Left ventricle myocardium inferior (tissue), 1 donor: ENCODE measurements at regions of chr18 and their contacts with region 1.

Region 1: DNA sequence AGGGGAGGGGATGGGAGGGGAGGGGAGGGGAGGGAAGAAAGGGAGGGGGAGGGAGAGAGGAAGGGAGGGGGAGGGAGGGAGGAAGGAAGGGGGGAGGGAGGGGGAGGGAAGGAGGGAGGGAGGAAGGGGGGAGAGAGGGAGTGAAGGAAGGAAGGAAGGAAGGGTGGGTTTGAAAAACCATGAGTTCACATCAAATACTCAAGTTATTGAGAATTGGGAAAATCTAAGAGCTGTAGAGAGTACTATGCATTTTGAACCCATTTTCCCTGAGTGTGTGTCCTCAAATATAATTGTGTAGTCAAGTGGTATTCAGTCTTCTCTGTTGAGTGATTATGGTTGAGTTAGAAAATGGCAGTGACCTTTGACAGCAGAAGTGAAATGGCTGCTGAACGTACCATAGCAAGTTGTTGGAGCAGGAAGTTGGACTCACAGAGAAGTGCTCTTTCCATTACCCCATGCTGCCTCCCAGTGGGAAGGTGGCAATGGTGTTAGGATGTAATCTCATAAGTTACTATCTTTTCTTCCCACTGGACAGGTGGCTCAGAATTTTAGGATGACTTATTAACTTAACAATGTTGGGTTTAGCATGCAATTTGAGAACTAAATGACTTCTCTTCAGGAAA is 214.6 kb downstream of the SETBP1 start:
- DNase-seq: peak; percentile 28
- H3K4me3 ChIP-seq: no peak overlapping the region
- H3K27ac ChIP-seq: no peak overlapping the region
- H3K4me1 ChIP-seq: peaks cover 23% of the 10 kb centered on the region
- H3K27me3 ChIP-seq: peaks cover 43% of the 10 kb centered on the region
- CTCF ChIP-seq: peak; percentile 69

Region 2: DNA sequence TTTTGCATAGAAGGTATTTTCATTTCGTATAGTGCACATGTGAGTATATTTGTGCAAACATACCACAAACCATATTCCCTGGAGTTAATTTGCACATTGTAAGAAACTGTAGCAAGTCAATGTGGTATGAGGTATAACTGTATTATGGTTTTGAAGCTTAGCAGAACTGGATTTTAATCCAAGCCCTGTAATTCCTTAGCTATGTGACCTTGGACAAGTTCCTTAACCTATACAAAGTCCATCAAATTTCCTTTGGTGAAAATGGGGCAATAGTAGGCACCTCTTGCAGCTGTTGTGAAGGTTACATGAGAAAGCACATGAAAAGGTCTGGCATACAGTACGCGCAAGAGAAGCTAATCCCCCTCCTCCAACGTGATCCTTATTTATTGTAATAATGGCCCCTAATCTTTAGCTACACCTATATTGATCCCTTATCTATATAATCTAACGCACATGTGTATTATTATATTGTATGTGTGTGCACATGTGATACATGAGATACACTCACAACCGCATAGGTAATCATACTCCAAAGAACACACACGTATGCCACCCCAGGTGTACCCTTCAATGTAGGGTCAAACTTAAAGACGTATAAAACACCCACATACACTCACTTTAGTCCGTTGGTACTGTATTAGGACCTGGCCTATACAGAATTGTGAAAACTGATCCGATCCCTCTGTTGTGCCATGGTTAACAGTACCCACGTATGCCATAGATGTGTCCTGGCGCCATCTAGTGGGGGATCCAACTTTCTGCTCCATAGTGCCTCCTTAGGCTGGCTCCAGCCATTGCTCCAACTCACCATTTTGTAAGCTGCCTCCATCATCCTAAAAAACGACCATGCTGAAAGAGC is 317.1 kb after region 1 on chr18:
- intact Hi-C with region 1: loop called (anchors 10 kb)
- DNase-seq: peak; percentile 71
- H3K4me3 ChIP-seq: no peak overlapping the region
- H3K27ac ChIP-seq: no peak overlapping the region
- H3K4me1 ChIP-seq: no peaks in the 10 kb centered on the region
- H3K27me3 ChIP-seq: no peaks in the 10 kb centered on the region
- CTCF ChIP-seq: peak; percentile 95